ENCODE measurements at regions of chr10 and their contacts with region 1.

Region 1: GRCh38 chr10:62048919-62049623 is 147.6 kb downstream of the ARID5B start:
- DNase-seq: no peak
- CTCF ChIP-seq: no peak

Region 2: DNA sequence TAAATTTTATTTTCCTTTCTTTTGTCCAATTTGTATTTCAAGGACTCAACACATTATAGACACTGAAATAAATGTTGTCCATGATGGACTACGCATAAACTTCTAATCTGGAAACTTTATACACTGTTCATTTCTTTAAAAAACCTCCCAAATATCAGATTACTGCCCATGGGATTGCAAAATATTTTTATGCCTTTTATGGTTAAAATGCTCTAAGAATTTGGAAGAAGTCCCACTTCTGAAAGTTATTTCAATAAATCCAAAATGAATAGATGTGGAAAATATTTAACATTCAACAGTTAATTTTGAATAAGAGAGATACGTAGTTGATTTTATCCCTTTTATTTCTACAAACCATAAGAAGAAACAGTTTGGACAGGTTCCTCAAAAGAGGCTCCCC is 340.2 kb before region 1 on chr10:
- in situ Hi-C with region 1: no loop called
- DNase-seq: no peak
- CTCF ChIP-seq: no peak

Region 3: GRCh38 chr10:62244780-62245467 is 195.9 kb after region 1 on chr10:
- in situ Hi-C with region 1: loop called (anchors 10 kb)
- DNase-seq: peak; percentile 30
- CTCF ChIP-seq: peak; percentile 84